HepG2 (cell line): ENCODE measurements at regions of chr2 and their contacts with region 1.

Region 1: DNA sequence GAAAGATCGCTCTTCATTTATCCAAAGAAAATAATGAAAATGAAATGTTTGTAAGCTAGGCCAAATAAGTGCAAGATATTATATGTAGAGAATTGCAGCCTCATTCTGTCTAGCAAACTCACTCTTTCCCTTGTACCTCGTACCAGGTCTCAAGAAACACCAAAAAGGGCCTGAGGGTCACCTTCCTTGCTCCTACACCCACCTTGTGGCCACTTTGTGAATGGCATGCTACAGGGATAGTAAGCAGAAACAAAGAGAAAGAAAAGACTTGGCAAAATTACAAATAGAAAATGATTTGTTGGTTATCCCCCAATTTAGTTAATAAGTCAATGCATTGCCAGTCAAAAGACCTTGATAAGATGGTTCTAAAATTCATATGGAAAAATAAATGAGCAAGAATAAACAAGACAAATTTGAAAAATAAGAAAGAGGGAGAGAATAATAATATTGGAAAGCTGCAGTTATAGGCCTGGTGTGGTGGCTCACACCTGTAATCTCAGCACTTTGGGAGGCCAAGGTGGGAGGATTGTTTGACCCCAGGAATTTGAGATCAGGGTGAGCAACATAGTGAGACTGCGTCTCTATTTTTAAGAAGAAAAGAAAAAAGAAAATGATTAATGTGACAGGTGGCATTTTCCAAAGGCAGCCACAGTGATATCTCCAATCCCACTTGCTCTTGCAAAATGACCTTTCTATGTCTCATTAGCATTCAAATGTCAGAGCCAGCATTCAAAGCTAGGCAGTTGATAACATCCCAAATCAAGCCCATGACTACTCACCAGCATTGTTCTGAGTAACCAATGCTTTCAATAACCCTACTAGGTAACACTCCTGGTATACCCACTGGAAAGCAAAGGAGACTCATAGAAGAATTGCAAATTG is 38.8 kb upstream of the BMP10 start:
- DNase-seq: peak; percentile 58
- ATAC-seq: peak; percentile 73
- H3K4me3 ChIP-seq: no peak overlapping the region
- H3K27ac ChIP-seq: no peak overlapping the region
- H3K4me1 ChIP-seq: peaks cover 10% of the 10 kb centered on the region
- H3K27me3 ChIP-seq: peaks cover 1 to 15% of the 10 kb centered on the region in 2 experiments; a peak in 1 of 5 replicates
- CTCF ChIP-seq: peak; percentile 84
- EP300 ChIP-seq: no peak
- POLR2A ChIP-seq: no peak
- RAD21 ChIP-seq: no peak

Region 2: GRCh38 chr2:68837164-68837860 is 72.7 kb before region 1 on chr2:
- CTCF ChIA-PET with region 1: no interaction called
- POLR2A ChIA-PET with region 1: no interaction called
- in situ Hi-C with region 1: no loop called
- intact Hi-C with region 1: loop called (anchors 5 kb)
- DNase-seq: peak; percentile 55
- ATAC-seq: peak; percentile 97
- H3K4me3 ChIP-seq: no peak overlapping the region
- H3K27ac ChIP-seq: no peak overlapping the region
- H3K4me1 ChIP-seq: no peaks in the 10 kb centered on the region
- H3K27me3 ChIP-seq: peaks cover 4 to 8% of the 10 kb centered on the region in 2 experiments; a peak in 3 of 5 replicates
- CTCF ChIP-seq: peak; percentile 86
- EP300 ChIP-seq: no peak
- POLR2A ChIP-seq: no peak
- RAD21 ChIP-seq: peak; percentile 58

Region 3: GRCh38 chr2:68946117-68946516 is 36.1 kb after region 1 on chr2:
- CTCF ChIA-PET with region 1: no interaction called
- POLR2A ChIA-PET with region 1: no interaction called
- in situ Hi-C with region 1: no loop called
- intact Hi-C with region 1: no loop called
- DNase-seq: no peak
- ATAC-seq: no peak
- H3K4me3 ChIP-seq: no peak overlapping the region
- H3K27ac ChIP-seq: no peak overlapping the region
- H3K4me1 ChIP-seq: peaks cover 18% of the 10 kb centered on the region
- H3K27me3 ChIP-seq: peaks cover 0 to 7% of the 10 kb centered on the region in 2 experiments; a peak in 3 of 5 replicates
- CTCF ChIP-seq: no peak
- EP300 ChIP-seq: no peak
- POLR2A ChIP-seq: no peak
- RAD21 ChIP-seq: no peak